Breast epithelium (tissue), 4 donors: ENCODE measurements at regions of chr17 and their contacts with region 1.

Region 1: GRCh38 chr17:52790359-52790955 is 631.9 kb upstream of the CA10 start:
- DNase-seq: no peak
- H3K4me3 ChIP-seq: no peak overlapping the region
- H3K27ac ChIP-seq: no peak overlapping the region
- H3K4me1 ChIP-seq: no peaks in the 10 kb centered on the region
- H3K27me3 ChIP-seq: no peaks in the 10 kb centered on the region
- CTCF ChIP-seq: no peak
- POLR2A ChIP-seq: no peak

Region 2: GRCh38 chr17:52841971-52842370 is 51.5 kb after region 1 on chr17:
- intact Hi-C with region 1: no loop called
- DNase-seq: no peak
- H3K4me3 ChIP-seq: no peak overlapping the region
- H3K27ac ChIP-seq: no peak overlapping the region
- H3K4me1 ChIP-seq: no peaks in the 10 kb centered on the region
- H3K27me3 ChIP-seq: no peaks in the 10 kb centered on the region
- CTCF ChIP-seq: no peak
- POLR2A ChIP-seq: no peak

Region 3: GRCh38 chr17:53949486-53950090 is 1159.1 kb after region 1 on chr17:
- intact Hi-C with region 1: loop called (anchors 10 kb)
- DNase-seq: no peak
- H3K4me3 ChIP-seq: no peak overlapping the region
- H3K27ac ChIP-seq: no peak overlapping the region
- H3K4me1 ChIP-seq: no peaks in the 10 kb centered on the region
- H3K27me3 ChIP-seq: no peaks in the 10 kb centered on the region
- CTCF ChIP-seq: no peak
- POLR2A ChIP-seq: no peak